Transverse colon (tissue), 4 donors: ENCODE measurements at regions of chr7 and their contacts with region 1.

Region 1: DNA sequence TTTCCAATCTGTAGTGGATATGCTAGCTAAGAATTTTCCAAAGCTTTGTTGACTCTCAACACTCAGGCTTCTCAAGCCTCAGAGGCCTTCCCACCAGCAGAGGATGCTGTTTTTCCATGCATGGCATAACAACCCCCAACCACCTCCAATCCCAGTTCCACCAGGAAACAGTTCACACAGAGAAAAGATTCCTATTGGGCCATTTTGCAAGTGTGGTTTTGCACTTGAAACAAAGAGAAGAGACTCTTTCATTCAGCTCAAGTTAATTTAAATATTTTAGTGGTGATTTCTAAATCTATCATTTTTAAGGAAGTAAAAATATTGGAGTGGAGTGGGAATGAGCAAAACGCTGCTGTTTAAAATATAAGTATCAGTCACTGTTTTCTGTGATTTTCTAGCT is 105.6 kb upstream of the COL1A2 start:
- DNase-seq: peak; percentile 48
- H3K4me3 ChIP-seq: no peak overlapping the region
- H3K27ac ChIP-seq: no peak overlapping the region
- H3K4me1 ChIP-seq: no peaks in the 10 kb centered on the region
- H3K27me3 ChIP-seq: no peaks in the 10 kb centered on the region
- CTCF ChIP-seq: peak; percentile 65 to 75 (median 66)
- EP300 ChIP-seq: no peak
- POLR2A ChIP-seq: no peak

Region 2: DNA sequence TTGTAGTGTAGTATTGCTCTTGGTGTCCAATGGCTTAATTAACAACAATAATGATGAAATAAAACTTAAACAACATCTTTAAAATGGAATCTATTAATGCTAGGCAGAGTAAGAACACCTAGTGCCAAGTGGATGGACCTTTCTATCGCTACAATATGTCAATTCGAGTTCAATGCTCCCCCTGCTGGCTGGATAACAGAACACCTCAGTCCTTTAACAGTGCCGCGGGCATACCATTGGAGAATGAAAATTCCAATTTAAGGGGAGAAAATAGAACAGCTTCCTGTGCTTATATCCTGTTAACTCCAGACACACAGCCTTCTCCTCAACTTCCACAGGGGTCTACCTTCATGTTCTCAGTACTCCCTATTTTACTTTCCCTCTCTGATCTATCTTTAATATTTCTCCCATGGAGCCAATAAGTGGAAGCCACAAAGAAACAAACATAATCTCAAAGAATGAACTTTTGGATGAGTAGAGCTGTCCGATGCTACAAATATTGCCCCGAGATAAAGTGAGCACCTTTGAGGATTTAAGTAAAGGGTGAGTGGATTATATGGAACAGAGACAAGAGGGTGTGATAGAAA is 147.0 kb after region 1 on chr7:
- in situ Hi-C with region 1: no loop called
- intact Hi-C with region 1: loop called (anchors 2 kb)
- DNase-seq: peak; percentile 65
- H3K4me3 ChIP-seq: no peak overlapping the region
- H3K27ac ChIP-seq: no peak overlapping the region
- H3K4me1 ChIP-seq: peaks cover 0 to 17% (median 12%) of the 10 kb centered on the region in 4 donors
- H3K27me3 ChIP-seq: no peaks in the 10 kb centered on the region
- CTCF ChIP-seq: peak; percentile 65 to 87 (median 77)
- EP300 ChIP-seq: no peak
- POLR2A ChIP-seq: no peak

Region 3: GRCh38 chr7:94556028-94556427 is 267.0 kb after region 1 on chr7:
- in situ Hi-C with region 1: no loop called
- intact Hi-C with region 1: no loop called
- DNase-seq: no peak
- H3K4me3 ChIP-seq: no peak overlapping the region
- H3K27ac ChIP-seq: no peak overlapping the region
- H3K4me1 ChIP-seq: no peaks in the 10 kb centered on the region
- H3K27me3 ChIP-seq: no peaks in the 10 kb centered on the region
- CTCF ChIP-seq: no peak
- EP300 ChIP-seq: no peak
- POLR2A ChIP-seq: no peak